ENCODE measurements at regions of chr10 and their contacts with region 1.

Region 1: DNA sequence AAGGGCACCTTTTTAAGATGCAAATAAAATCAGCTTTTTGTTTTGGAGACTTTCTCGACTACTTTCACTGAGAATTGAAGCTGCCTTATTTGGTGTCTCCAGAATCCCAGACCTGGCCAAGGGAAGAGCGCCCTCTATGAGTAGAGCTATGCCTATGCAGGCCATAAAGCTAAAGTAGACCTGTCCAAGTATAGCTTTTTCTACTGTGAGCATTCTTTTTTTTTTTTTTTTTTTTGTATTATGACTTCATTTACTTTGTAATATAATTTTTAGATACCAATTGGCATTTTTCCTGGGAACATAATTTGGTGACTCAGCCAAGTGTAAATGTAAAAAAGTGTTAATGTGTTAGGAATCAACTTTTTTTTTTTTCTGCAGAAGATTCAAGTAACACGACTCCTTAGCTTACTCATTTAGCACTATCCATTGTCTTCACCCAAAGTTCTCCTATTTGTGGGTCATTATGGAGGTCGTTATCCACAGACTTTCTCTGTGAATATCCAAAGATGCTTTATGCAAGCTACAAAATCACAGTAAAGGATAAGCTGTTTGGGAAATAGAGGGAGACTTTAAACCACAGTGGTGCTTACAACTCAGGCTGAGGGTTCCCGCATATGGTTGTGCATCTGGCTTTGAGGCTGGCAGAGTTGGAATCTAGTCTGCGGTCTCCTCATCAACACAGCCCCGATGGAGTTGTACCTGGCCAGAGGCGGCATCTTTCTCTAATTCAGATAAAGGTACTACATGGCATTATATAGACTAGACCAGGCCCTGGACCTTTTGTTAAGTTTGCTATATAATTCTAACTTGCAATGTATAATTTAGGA is 1040.2 kb upstream of the SORCS1 start:
- DNase-seq: peak in 1 of 2 experiments; percentile 31
- H3K4me3 ChIP-seq: no peak overlapping the region
- H3K27ac ChIP-seq: no peak overlapping the region
- H3K4me1 ChIP-seq: peaks cover 0 to 5% (median 1%) of the 10 kb centered on the region in 4 experiments; a peak in 2 of 7 replicates
- H3K27me3 ChIP-seq: no peaks in the 10 kb centered on the region
- CTCF ChIP-seq: peak in 2 of 3 experiments; percentile 70 to 83; a peak in 3 of 4 replicates
- EP300 ChIP-seq: no peak
- POLR2A ChIP-seq: no peak
- RAD21 ChIP-seq: peak; percentile 80 to 84

Region 2: GRCh38 chr10:108112219-108112618 is 92.5 kb before region 1 on chr10:
- CTCF ChIA-PET with region 1: interaction called, 39 read pairs
- POLR2A ChIA-PET with region 1: no interaction called
- DNase-seq: peak in 1 of 2 experiments; percentile 1
- H3K4me3 ChIP-seq: no peak overlapping the region
- H3K27ac ChIP-seq: no peak overlapping the region
- H3K4me1 ChIP-seq: no peaks in the 10 kb centered on the region; a peak in 1 of 7 replicates
- H3K27me3 ChIP-seq: no peaks in the 10 kb centered on the region
- CTCF ChIP-seq: peak in 2 of 3 experiments; percentile 61 to 66; a peak in 3 of 4 replicates
- EP300 ChIP-seq: no peak
- POLR2A ChIP-seq: no peak
- RAD21 ChIP-seq: peak; percentile 67 to 75

Region 3: DNA sequence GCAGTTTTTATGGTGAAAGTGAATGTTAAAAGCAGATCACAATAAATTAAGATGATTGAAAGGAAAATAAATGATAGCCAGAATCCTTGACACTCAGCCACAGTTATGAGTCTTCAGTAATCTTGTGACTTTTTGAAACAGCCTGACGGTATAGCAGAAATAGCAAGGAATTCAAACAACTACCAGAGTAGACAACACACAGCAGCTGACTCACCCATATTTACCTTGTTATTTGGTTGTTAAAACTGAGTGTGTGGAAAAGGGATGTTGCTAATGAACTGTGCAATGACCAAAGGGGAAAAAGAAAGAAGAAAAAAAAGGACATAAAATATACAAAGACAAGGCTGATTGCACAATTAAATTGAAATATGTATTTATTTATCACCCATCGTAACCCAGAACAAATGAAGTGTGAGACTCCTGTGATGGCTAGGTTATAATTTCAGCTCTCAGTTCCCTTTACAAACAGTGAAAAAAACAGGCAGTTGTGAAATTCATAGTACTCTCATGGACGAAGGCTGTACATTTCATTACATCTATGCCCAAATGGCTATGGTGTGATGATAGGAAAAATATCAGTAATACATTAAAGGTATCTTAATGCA is 17.2 kb before region 1 on chr10:
- CTCF ChIA-PET with region 1: interaction called, 28 read pairs
- POLR2A ChIA-PET with region 1: no interaction called
- DNase-seq: no peak
- H3K4me3 ChIP-seq: no peak overlapping the region
- H3K27ac ChIP-seq: no peak overlapping the region
- H3K4me1 ChIP-seq: no peaks in the 10 kb centered on the region
- H3K27me3 ChIP-seq: no peaks in the 10 kb centered on the region
- CTCF ChIP-seq: no peak
- EP300 ChIP-seq: no peak
- POLR2A ChIP-seq: no peak
- RAD21 ChIP-seq: no peak

Region 4: GRCh38 chr10:108238261-108238660 is 33.6 kb after region 1 on chr10:
- CTCF ChIA-PET with region 1: interaction called, 11 read pairs
- POLR2A ChIA-PET with region 1: interaction called, 3 read pairs
- DNase-seq: no peak
- H3K4me3 ChIP-seq: no peak overlapping the region
- H3K27ac ChIP-seq: no peak overlapping the region
- H3K4me1 ChIP-seq: peaks cover 0 to 4% (median 1%) of the 10 kb centered on the region in 4 experiments; a peak in 2 of 7 replicates
- H3K27me3 ChIP-seq: peaks cover 0 to 2% (median 0%) of the 10 kb centered on the region in 4 experiments; a peak in 1 of 7 replicates
- CTCF ChIP-seq: no peak
- EP300 ChIP-seq: no peak
- POLR2A ChIP-seq: no peak
- RAD21 ChIP-seq: no peak